HAP-1 (cell line): ENCODE measurements at regions of chr4 and their contacts with region 1.

Region 1: DNA sequence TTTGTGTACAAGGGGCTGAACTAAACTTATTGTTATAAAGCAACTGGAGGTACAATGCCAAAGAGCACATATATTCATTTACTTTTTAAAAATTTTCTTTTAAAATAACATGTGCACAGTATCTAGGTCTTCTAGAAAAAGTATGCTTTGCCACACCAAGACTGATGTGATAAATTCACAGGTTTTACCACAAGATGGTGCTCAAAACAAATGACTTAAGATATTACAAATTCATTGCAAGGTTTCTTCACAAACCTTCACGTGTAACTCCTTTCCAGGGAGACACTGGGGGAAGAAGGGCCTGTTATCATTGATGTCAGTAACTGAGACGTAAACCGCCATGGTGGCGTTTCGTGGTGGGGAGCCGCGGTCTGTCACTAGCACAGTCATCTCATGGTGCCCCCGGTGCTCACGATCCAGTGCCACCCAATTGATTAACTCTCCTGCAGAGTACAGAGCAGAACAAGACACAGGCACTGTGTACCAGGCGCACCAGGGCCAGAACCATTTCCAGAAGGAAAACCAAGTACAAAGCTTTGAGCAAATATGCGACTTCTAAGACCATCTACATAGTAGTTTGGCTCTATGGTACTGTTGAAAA is 162.2 kb downstream of the DCHS2 start:
- DNase-seq: peak in 1 of 2 experiments; percentile 48
- H3K4me3 ChIP-seq: no peak overlapping the region
- H3K4me1 ChIP-seq: no peaks in the 10 kb centered on the region
- H3K27me3 ChIP-seq: no peaks in the 10 kb centered on the region

Region 2: GRCh38 chr4:154208424-154208823 is 120.9 kb before region 1 on chr4:
- in situ Hi-C with region 1: no loop called
- DNase-seq: no peak
- H3K4me3 ChIP-seq: no peak overlapping the region
- H3K4me1 ChIP-seq: no peaks in the 10 kb centered on the region
- H3K27me3 ChIP-seq: no peaks in the 10 kb centered on the region

Region 3: DNA sequence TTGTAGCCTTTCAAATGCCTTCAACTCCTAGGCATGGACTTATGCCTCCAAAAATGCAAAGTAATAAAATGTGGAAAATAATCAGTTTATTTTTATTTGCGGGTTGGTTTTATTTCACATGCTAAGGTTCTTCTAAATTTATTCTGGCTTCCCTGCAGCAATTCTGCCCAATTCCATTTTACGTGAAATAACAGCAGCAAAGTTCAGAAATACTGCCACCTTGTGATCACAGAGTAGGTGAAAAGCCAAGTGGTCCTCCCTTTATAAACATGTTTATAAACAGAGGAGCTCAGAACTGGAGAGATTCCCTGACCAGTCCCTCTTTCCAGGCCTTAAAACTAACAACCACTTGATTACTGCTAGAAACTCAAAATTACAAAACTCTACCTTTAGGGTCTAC is 176.9 kb after region 1 on chr4:
- in situ Hi-C with region 1: loop called (anchors 10 kb)
- DNase-seq: peak; percentile 36 to 47
- H3K4me3 ChIP-seq: no peak overlapping the region
- H3K4me1 ChIP-seq: no peaks in the 10 kb centered on the region; the same call in 1 of the 2 replicates
- H3K27me3 ChIP-seq: peaks cover 4% of the 10 kb centered on the region; the same call in 1 of the 2 replicates

Region 4: DNA sequence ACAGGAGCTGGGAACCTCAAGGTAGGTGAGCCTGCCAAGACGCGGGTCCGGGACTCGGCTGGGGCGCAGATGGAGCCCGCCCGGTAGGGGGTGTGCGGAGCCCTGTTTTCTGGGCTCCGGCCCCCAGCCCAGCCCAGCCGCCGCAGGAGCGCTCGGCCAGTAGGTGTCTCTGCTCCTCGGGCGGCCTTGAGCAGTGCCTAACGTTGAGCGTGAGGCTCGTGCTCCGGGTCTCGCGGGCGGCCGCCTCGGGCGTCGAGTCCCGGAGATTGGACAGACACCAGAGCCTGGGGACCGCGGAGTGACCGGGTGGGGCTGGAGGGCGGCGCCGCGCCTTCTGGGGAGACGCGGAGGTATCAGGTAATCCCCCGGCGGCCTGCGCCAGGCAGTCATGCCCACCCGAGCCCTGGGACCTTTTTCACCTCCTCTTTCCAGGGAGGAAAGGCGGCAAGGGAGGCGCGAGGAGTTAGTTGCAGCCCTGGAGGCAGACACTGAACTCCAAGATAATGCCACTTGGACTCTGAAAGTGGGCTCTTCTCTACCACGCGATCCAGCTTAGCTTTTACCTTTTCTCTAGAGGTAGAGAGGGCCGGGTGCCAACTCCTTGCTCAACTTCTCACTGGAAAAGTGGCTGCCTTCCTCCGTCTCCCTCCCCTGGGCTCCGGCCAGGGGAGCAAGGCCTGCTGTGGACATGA is 297.6 kb after region 1 on chr4:
- in situ Hi-C with region 1: loop called (anchors 10 kb)
- DNase-seq: peak; percentile 46 to 77
- H3K4me3 ChIP-seq: no peak overlapping the region
- H3K4me1 ChIP-seq: no peaks in the 10 kb centered on the region
- H3K27me3 ChIP-seq: no peaks in the 10 kb centered on the region